ENCODE measurements at regions of chr12 and their contacts with region 1.

Region 1: DNA sequence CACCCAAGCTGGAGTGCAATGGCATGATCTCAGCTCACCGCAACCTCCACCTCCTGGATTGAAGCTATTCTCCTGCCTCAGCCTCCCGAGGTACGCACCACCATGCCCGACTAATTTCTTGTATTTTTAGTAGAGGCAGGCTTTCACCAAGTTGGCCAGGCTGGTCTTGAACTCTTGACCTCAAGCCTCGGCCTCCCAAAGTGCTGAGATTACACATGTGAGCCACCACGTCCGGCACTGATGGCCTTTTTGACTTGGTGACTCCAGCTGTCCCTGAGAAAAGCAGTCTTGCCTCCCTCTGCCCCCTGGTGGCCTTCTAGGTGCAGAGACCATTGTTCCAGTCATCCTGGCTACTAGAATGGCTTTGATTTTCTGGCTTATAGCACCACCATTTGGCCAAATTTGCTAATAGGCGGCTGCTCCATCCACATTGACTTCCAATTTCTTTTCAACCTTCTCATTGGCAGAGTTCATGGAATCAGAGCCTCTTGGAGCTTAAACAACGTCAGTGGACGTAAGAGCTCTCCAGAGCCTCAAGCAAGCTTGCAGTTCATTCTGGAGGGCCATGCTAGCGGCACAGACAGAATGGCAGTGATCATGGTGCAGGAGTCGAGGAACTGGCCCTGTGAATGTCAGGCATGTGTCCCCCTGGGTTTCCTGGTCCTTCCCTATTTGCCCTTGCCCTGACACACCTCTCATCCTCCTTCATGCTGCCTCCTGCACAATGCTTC is 25.4 kb upstream of the EIF4B start:
- DNase-seq: peak; percentile 91 to 93
- ATAC-seq: peak; percentile 87
- H3K4me3 ChIP-seq: no peak overlapping the region
- H3K27ac ChIP-seq: no peak overlapping the region
- H3K4me1 ChIP-seq: no peaks in the 10 kb centered on the region
- H3K27me3 ChIP-seq: no peaks in the 10 kb centered on the region

Region 2: DNA sequence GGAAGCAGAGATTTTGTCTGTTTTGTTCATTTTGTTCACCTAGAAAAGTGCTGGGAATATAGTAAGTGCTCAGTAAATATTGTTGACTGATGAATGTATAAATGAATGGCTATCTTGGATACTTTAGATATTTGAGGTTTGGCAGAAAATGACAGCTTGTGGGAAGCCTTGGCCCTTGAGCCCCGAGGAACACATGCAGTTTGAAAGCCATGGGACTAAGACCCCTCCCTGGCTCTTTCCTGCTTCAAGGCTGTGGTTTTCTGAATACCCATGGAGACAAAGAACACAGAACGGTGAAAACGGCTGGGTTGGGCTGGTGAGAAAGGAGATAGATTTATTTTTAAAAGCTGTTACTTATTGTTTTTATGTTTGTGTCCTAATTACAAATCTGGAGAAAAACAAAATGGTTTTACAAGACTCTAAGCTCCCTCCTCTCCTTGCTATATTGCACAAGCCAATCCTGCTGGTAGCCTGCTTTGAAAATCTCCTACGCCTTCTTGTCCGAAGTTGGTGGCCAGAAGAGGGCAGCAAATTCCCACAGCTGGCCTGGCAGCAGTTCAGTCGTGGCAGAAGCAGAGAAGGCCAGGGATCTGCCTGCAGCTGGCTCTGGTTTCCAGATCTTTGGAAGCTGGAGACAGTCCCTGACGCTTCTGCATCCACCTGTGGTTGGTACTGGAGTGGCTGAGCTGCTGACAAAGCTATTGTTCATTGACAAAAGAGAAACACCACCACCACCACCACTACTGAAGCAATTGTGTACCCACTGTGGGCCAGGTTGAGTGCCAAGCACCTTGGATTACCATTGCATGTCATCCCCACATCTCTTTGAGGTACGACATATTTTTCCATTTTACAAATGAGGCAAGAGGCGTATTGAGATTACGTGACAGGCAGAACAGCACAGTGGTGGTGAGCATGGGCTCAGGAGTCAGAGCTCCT is 608.4 kb before region 1 on chr12:
- intact Hi-C with region 1: loop called in 1 of 2 experiments (anchors 10 kb)
- DNase-seq: peak; percentile 85 to 91
- ATAC-seq: peak; percentile 85
- H3K4me3 ChIP-seq: no peak overlapping the region
- H3K27ac ChIP-seq: no peak overlapping the region
- H3K4me1 ChIP-seq: no peaks in the 10 kb centered on the region
- H3K27me3 ChIP-seq: no peaks in the 10 kb centered on the region

Region 3: GRCh38 chr12:52582971-52583456 is 397.8 kb before region 1 on chr12:
- intact Hi-C with region 1: loop called (anchors 10 kb)
- DNase-seq: no peak
- ATAC-seq: peak; percentile 64
- H3K4me3 ChIP-seq: no peak overlapping the region
- H3K27ac ChIP-seq: no peak overlapping the region
- H3K4me1 ChIP-seq: no peaks in the 10 kb centered on the region
- H3K27me3 ChIP-seq: no peaks in the 10 kb centered on the region

Region 4: DNA sequence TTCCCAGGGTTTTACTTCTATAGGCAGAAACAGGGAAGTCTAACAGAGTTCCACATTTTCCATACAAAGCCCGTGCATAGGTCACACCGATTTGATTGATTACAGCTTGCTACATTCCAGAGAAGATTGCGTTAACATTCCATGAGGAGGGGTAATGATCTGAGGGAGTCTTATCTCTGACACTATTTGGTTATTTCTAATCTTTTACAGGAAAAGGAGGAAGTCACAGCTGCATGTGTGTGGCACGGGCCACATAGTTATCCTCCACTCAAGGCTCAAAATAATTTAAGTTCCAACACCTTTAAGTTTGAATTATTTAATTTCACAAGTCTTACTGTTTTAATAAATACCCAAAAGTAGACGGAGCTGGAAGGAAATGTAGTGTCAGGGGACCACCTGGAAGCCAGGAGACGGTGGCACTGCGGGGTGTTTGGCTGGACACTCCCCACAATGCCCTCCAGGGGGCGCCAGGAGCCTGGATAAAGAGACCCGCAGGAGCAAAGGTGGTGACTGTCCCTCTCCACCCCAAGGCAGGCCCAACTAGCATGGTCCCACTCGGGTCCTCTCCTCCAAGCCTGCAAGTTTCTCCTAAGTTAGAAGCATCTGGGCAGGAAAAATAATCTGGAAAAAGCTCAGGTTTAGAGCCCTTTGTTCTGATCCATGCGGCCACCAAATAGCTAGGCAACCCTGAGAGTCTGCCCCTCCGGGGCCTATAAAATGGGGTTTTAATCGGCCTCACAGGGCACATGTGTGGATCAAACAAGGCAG is 96.1 kb before region 1 on chr12:
- intact Hi-C with region 1: loop called (anchors 1 to 2 kb)
- DNase-seq: peak; percentile 83 to 95
- ATAC-seq: peak; percentile 89
- H3K4me3 ChIP-seq: no peak overlapping the region
- H3K27ac ChIP-seq: no peak overlapping the region
- H3K4me1 ChIP-seq: no peaks in the 10 kb centered on the region
- H3K27me3 ChIP-seq: no peaks in the 10 kb centered on the region

Region 5: GRCh38 chr12:52903285-52903854 is 77.5 kb before region 1 on chr12:
- intact Hi-C with region 1: loop called in 1 of 2 experiments (anchors 5 kb)
- DNase-seq: peak; percentile 87 to 89
- ATAC-seq: peak; percentile 86
- H3K4me3 ChIP-seq: peak overlapping the region; percentile 7 to 24
- H3K27ac ChIP-seq: peak overlapping the region in 1 of 2 donors; percentile 0
- H3K4me1 ChIP-seq: no peaks in the 10 kb centered on the region
- H3K27me3 ChIP-seq: no peaks in the 10 kb centered on the region

Region 6: DNA sequence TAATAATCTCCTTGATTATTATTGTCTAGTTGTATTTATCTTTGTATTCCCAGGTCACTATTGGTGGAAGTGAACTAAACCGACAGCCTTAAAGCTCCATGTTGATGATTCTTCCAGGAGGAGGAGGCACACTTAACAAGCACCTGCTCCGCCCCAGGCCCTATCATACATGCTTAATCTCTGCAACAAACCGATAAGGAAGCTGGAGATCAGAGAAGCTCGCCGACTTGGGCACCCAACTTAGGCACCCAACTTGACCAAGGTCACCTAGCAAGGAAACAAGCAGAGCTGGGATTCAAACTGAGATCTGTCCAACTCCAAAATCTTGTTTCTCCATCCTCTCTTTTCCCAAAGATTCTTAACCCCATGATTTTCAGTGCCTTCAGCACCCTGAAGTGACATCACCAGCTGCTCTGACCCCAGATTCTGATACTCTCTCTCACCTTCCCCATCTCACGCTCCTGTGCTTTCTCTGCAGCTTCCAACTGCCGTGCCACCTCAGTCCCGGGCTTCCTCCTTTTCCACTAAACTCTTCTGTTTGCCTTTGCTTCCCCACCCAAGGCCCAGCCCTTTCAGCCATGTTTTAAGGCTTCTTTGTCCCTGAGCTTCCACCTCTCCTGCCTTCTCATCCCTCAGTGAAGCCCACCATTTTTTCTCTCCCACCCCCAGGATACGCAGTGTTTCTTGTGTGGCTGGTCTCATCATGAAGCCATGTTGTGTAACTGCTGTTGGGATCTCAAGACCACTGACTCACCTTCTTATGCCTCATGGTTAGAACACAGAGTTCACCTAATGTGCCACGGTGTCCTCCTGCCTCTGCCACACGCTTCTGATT is 38.6 kb before region 1 on chr12:
- intact Hi-C with region 1: no loop called
- DNase-seq: no peak
- ATAC-seq: no peak
- H3K4me3 ChIP-seq: no peak overlapping the region
- H3K27ac ChIP-seq: no peak overlapping the region
- H3K4me1 ChIP-seq: no peaks in the 10 kb centered on the region
- H3K27me3 ChIP-seq: no peaks in the 10 kb centered on the region